Left colon (tissue), 2 donors: ENCODE measurements at regions of chr1 and their contacts with region 1.

Region 1: GRCh38 chr1:64242895-64243756 is 39.7 kb downstream of the UBE2U start:
- DNase-seq: no peak
- ATAC-seq: peak; percentile 61

Region 2: GRCh38 chr1:63615768-63616420 is 627.2 kb before region 1 on chr1:
- intact Hi-C with region 1: loop called in 1 of 2 experiments (anchors 5 kb)
- DNase-seq: peak; percentile 28 to 40
- ATAC-seq: peak; percentile 70

Region 3: DNA sequence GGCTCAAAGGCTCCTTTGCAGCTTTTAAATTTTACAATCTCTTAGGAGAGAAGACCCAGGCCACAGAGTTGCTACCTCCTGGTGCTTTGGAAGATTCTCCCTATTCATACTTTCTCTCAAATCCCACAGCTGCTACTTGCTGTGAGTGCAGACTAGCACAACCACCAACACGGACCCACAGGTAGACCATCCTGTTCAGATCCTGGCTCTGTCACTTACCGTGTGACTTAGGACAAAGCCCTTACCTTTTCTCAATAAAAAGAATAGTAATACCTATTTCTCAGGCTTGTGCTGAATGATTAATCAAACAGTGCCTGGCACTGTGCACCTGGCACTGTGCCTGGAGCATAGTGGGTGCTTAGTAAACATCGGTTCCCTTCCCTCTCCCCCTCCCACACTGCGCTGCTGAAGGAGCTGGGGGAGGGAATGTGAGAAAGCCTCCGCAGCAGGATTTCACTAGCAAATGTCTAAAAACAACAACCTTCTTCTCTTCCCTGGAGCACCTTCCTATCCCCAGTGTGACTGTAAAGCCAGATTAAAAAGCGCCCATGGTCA is 568.2 kb before region 1 on chr1:
- intact Hi-C with region 1: loop called in 1 of 2 experiments (anchors 5 kb)
- DNase-seq: no peak
- ATAC-seq: peak; percentile 4

Region 4: GRCh38 chr1:63691701-63692425 is 551.3 kb before region 1 on chr1:
- intact Hi-C with region 1: loop called in 1 of 2 experiments (anchors 5 kb)
- DNase-seq: peak; percentile 40 to 57
- ATAC-seq: peak; percentile 95

Region 5: DNA sequence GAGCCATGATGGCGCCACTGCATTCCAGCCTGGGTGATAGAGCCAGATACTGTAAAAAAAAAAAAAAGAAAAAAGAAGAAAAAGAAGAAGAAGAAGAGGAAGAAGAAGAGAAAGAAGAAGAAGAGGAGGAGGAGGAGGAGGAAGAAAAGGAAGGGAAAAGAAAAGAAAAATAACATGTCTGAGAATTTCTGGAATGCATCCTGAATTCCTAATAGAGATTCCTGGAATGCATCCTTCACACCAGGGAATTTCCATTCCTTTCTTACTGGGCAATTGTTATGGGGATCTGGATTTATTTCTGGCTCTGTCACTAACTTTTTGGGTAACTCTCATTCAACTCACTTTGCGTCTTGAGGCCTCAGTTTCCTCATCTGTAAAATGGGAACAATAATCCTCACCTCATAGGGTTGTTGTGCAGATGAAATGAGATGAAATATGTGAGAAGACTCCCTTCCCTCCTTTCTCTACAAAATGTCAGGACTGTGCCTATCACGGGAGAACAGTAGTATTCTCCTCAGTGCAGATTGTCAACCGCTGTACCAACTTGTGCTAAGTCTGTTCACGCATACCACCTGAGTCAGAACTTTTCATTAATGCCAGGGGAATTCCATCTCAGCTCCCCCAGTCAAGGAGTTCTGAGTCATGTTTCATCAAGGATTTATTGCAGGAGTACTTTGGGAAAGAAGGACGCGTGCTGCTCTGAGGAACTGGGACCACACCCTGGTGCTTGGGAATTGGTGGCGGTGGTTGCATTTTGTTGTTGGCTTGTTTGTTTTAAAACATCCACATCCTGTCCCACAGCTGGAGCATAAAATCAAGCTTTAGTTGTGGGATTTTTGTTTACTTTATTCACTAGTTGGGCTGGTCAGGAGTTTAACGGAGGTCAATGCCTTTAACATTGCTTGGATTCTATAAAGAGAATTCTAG is 511.7 kb before region 1 on chr1:
- intact Hi-C with region 1: no loop called
- DNase-seq: peak in 1 of 2 donors; percentile 14
- ATAC-seq: peak; percentile 74

Region 6: GRCh38 chr1:63877816-63878215 is 365.3 kb before region 1 on chr1:
- intact Hi-C with region 1: no loop called
- DNase-seq: no peak
- ATAC-seq: no peak

Region 7: DNA sequence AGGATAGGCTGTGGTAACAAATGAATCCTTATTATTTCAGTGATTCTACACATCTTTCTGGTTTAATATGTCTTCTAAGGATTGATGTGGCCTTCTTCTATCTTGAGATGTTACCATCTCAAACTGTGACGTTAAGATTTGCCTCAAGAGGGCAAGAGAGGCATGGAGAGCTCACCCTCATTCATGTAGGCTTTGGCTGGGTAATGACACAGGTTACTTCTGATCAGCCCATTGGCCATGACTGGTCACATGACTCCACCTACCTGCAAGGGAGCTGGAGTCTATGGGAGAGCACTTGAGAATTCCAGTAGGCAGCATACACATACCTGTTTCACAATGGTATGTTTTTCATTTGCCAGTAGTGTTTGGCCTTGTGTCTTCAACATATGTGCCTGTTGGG is 256.8 kb after region 1 on chr1:
- intact Hi-C with region 1: no loop called
- DNase-seq: no peak
- ATAC-seq: no peak